CD4-positive, alpha-beta memory T cell (primary cell): ENCODE measurements at regions of chr7 and their contacts with region 1.

Region 1: DNA sequence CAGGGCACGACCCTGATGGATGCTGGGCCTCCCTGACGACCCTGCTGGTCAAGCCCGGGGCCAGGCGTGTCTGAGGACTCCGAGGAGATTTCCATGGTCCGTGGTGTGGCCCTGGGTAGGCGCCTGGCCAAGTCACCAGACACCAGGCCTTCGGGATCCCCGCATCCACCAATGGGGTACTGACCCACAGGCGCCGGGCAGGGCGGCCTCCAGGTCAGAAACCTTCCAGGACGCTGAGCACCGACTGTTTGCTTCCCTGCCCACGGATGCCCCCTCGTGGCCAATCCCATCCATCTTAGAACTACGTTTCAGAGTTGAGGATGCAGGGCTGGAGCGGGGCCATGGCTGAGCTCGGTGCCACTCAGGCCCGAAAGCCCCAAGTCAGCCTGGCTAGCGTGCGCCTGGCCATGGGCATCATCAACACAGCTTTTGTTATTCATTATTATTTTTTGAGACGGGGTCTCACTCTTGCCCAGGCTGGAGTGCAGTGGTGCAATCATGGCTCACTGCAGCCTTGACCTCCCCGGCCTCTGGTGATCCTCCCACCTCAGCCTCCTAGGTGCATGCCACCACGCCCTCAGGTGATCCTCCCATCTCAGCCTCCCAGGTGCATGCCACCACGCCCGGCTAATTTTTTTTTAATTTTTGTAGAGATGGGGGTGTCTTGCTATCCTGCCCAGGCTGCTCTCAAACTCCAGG is 7.1 kb upstream of the AMZ1 start:
- DNase-seq: peak in 4 of 5 donors; percentile 22 to 33 (median 30)
- H3K4me3 ChIP-seq: no peak overlapping the region
- H3K4me3 Mint-ChIP-seq: no peak overlapping the region
- H3K27ac ChIP-seq: no peak overlapping the region
- H3K27ac Mint-ChIP-seq: no peak overlapping the region
- H3K4me1 ChIP-seq: no peaks in the 10 kb centered on the region
- H3K4me1 Mint-ChIP-seq: no peaks in the 10 kb centered on the region
- H3K27me3 ChIP-seq: no peaks in the 10 kb centered on the region
- H3K27me3 Mint-ChIP-seq: peaks cover 4 to 7% of the 10 kb centered on the region in 2 donors

Region 2: GRCh38 chr7:2451171-2452073 is 229.5 kb before region 1 on chr7:
- CTCF ChIA-PET with region 1: interaction called, 28 read pairs
- POLR2A ChIA-PET with region 1: no interaction called
- intact Hi-C with region 1: no loop called
- DNase-seq: peak; percentile 60 to 68 (median 64)
- H3K4me3 ChIP-seq: peak overlapping the region in 1 of 2 donors; percentile 32
- H3K4me3 Mint-ChIP-seq: peak overlapping the region in 6 of 8 donors; percentile 15 to 67 (median 52)
- H3K27ac ChIP-seq: no peak overlapping the region
- H3K27ac Mint-ChIP-seq: peak overlapping the region in 1 of 7 donors; percentile 46
- H3K4me1 ChIP-seq: peaks cover 10% of the 10 kb centered on the region
- H3K4me1 Mint-ChIP-seq: peaks cover 0 to 9% (median 5%) of the 10 kb centered on the region in 4 donors
- H3K27me3 ChIP-seq: no peaks in the 10 kb centered on the region
- H3K27me3 Mint-ChIP-seq: no peaks in the 10 kb centered on the region

Region 3: DNA sequence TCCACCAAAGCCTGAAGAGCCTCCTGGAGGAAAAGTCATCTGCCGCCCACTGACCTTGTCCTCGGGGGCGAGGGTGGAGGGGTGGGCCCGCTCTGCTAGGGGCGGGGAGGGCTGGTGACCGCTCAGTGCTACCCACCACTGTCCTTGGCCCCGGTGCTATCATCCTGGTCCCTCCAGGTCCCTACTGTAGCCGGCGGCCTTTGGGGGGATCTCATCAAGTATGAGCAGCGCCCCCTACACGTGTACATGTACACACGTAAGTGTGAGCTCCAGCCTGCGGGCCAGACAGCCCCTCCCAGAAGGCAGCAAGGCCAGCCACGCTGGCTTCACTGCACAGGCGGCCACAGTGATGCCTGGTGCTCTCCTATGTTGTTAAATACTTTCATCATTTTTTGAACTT is 29.6 kb before region 1 on chr7:
- CTCF ChIA-PET with region 1: no interaction called
- POLR2A ChIA-PET with region 1: no interaction called
- intact Hi-C with region 1: no loop called
- DNase-seq: no peak
- H3K4me3 ChIP-seq: no peak overlapping the region
- H3K4me3 Mint-ChIP-seq: no peak overlapping the region
- H3K27ac ChIP-seq: no peak overlapping the region
- H3K27ac Mint-ChIP-seq: no peak overlapping the region
- H3K4me1 ChIP-seq: no peaks in the 10 kb centered on the region
- H3K4me1 Mint-ChIP-seq: no peaks in the 10 kb centered on the region
- H3K27me3 ChIP-seq: no peaks in the 10 kb centered on the region
- H3K27me3 Mint-ChIP-seq: no peaks in the 10 kb centered on the region

Region 4: GRCh38 chr7:2670720-2671391 is 10.1 kb before region 1 on chr7:
- CTCF ChIA-PET with region 1: interaction called, 14 read pairs
- POLR2A ChIA-PET with region 1: no interaction called
- intact Hi-C with region 1: no loop called
- DNase-seq: peak; percentile 53 to 62 (median 56)
- H3K4me3 ChIP-seq: no peak overlapping the region
- H3K4me3 Mint-ChIP-seq: peak overlapping the region in 3 of 8 donors; percentile 33 to 56 (median 43)
- H3K27ac ChIP-seq: no peak overlapping the region
- H3K27ac Mint-ChIP-seq: peak overlapping the region in 2 of 7 donors; percentile 29 to 53
- H3K4me1 ChIP-seq: peaks cover 7% of the 10 kb centered on the region
- H3K4me1 Mint-ChIP-seq: peaks cover 0 to 12% (median 4%) of the 10 kb centered on the region in 4 donors
- H3K27me3 ChIP-seq: no peaks in the 10 kb centered on the region
- H3K27me3 Mint-ChIP-seq: peaks cover 8 to 11% of the 10 kb centered on the region in 2 donors

Region 5: DNA sequence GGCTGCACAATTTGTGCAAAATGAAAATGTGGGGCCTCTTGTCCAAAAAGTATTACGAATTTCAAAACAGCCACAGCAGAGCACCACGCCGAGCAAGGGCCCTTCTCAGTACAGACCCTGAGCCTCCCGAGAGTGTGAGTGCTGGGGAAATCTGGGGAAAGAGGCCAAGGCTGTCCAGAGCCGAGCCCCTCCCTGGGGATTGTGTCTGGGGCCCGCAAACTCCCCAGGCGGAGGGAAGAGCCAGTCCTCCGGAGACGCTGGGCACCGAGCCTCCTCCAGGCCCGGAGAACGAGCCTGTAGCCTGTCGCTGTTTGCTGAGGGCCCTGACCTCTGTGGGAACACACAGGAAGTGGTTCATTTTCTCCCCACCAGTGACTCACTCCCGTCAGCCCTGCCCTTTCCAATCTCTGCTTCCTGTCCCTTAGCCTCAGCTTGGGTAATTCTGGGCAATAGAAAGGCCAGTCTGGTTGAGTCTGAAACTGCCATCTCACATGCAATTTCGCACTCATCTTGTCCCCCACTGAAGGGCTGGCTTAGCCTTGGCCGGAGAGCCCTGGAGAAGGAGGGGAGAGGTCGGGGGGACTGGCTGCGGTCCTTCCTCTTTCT is 182.6 kb after region 1 on chr7:
- CTCF ChIA-PET with region 1: no interaction called
- POLR2A ChIA-PET with region 1: no interaction called
- intact Hi-C with region 1: no loop called
- DNase-seq: peak; percentile 57 to 79 (median 64)
- H3K4me3 ChIP-seq: peak overlapping the region in 1 of 2 donors; percentile 42
- H3K4me3 Mint-ChIP-seq: peak overlapping the region; percentile 64 to 88 (median 78)
- H3K27ac ChIP-seq: peak overlapping the region; percentile 54
- H3K27ac Mint-ChIP-seq: peak overlapping the region; percentile 56 to 97 (median 94)
- H3K4me1 ChIP-seq: peaks cover 28% of the 10 kb centered on the region
- H3K4me1 Mint-ChIP-seq: peaks cover 15 to 28% (median 24%) of the 10 kb centered on the region in 4 donors
- H3K27me3 ChIP-seq: no peaks in the 10 kb centered on the region
- H3K27me3 Mint-ChIP-seq: no peaks in the 10 kb centered on the region